ENCODE measurements at regions of chr11 and their contacts with region 1.

Region 1: GRCh38 chr11:59598961-59599360 is 16.6 kb downstream of the OSBP start:
- DNase-seq: no peak
- H3K4me3 ChIP-seq: no peak overlapping the region
- H3K27ac ChIP-seq: no peak overlapping the region
- H3K4me1 ChIP-seq: no peaks in the 10 kb centered on the region
- H3K27me3 ChIP-seq: no peaks in the 10 kb centered on the region
- CTCF ChIP-seq: no peak
- POLR2A ChIP-seq: no peak

Region 2: DNA sequence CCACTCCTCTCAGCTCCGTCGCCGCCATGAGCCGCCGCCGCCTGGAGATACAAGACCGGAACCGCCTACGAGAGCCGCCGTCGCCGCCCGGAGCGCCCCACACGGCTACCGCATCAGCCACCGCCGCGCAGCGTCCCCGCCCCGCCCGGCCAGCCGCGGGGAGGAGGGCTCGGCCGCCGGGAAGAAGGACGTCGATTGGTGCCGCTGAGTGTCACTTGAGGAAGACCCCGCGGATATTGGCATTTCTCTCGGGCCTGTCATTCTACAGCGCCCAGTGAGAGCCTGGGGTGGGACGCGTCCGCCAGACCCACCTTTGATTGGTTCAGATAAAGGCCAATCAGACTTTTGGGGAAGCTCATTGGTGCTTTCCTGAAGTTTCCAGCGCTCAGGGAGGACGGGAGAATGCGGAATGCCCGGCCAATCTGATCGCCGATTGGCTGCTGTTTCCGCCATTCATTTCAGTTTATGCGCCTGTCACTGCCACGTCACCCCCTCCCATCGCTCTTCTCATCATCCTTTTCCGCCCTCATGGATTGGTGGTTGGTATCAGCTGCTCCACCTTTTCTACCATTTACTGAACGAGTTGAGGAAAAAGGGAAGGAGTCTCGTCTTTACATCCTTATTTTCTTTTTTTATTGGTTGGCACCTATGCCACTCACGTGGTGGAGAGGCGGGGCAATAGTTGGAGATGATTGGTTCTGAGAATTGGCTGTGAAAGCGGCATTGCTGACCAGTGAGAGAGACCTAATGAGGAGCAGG is 16.9 kb after region 1 on chr11 and contains the start of gene OSBP:
- CTCF ChIA-PET with region 1: no interaction called
- POLR2A ChIA-PET with region 1: no interaction called
- dilution Hi-C with region 1: no loop called
- intact Hi-C with region 1: no loop called
- DNase-seq: peak; percentile 100
- H3K4me3 ChIP-seq: peak within 1 kb of the TSS; percentile 74 to 90 (median 81)
- H3K27ac ChIP-seq: peak within 1 kb of the TSS; percentile 62
- H3K4me1 ChIP-seq: peaks cover 17% of the 10 kb centered on the region
- H3K27me3 ChIP-seq: no peaks in the 10 kb centered on the region
- CTCF ChIP-seq: no peak
- POLR2A ChIP-seq: peak; percentile 84
- total RNA-seq, gene OSBP: 37.5 and 37.9 TPM in 2 replicates

Region 3: DNA sequence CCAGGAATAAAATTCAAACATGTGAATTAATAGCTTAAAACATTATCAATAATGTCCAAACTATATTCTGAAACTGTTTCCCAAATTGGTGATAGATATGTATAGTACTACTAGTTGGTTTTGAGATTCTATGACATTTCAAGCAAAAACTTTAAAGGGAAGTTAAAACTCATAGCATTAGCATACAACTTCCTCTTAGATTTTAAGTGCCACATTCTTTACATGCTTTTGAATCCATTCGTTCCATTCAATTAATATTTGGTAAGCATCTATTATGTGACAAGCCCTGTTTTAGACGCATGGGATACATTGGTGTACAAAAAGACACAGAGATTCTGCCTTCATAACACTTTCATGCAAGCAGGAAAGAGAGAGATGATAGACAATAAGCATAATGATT is 61.0 kb after region 1 on chr11:
- CTCF ChIA-PET with region 1: no interaction called
- POLR2A ChIA-PET with region 1: no interaction called
- dilution Hi-C with region 1: no loop called
- intact Hi-C with region 1: loop called (anchors 10 kb)
- DNase-seq: peak; percentile 6
- H3K4me3 ChIP-seq: no peak overlapping the region
- H3K27ac ChIP-seq: no peak overlapping the region
- H3K4me1 ChIP-seq: peaks cover 9% of the 10 kb centered on the region
- H3K27me3 ChIP-seq: no peaks in the 10 kb centered on the region
- CTCF ChIP-seq: no peak
- POLR2A ChIP-seq: no peak

Measured in endothelial cell of umbilical vein (primary cell).